GM12878 (cell line): ENCODE measurements at regions of chr18 and their contacts with region 1.

Region 1: DNA sequence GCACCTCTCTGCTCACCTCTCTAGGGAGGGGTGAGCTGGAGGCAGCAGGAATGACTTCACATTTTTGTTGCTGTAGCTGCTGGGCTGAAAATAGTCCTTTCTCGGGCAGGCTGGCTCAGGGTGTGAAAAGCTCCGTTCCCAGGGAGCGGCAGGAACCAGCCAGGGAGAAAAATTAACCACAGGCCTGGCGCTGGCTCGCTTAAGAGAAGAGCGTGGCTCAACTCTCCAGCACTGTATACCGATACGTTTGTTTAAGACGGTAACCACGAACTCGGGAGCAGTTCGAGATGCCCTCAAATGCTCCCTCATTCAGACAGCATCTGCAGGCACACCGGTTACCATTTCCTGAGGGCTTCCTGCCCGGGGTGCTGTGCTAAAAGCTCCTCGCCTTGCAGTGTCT is 129.6 kb downstream of the CELF4 start:
- DNase-seq: no peak
- ATAC-seq: no peak
- H3K4me3 ChIP-seq: no peak overlapping the region
- H3K27ac ChIP-seq: no peak overlapping the region
- H3K4me1 ChIP-seq: no peaks in the 10 kb centered on the region; the same call in 1 of the 2 replicates
- H3K27me3 ChIP-seq: no peaks in the 10 kb centered on the region
- CTCF ChIP-seq: no peak
- EP300 ChIP-seq: no peak
- POLR2A ChIP-seq: no peak
- RAD21 ChIP-seq: no peak

Region 2: DNA sequence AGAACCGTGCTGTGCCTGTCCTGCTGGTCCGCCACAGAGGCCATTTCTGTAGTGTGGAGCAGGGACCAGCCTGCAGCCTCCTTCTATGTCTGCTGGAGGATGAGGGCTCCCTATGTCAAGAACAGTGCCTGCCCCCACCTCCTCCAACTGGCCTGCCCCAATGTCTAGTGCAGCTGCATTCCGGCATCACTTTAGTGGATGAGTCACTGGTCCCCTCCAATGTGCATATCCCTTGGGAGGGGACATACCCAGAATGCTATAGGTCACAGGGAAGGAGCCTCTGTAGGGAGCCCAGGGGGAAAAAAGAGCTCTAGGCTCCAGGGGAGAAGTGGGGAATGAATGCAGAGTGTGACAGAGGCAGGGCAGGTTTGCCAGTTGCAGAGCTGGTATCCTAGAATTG is 89.9 kb before region 1 on chr18:
- CTCF ChIA-PET with region 1: no interaction called
- POLR2A ChIA-PET with region 1: no interaction called
- RAD21 ChIA-PET with region 1: no interaction called
- SMC1A ChIA-PET with region 1: no interaction called
- in situ Hi-C with region 1: no loop called
- intact Hi-C with region 1: no loop called
- DNase-seq: no peak
- ATAC-seq: no peak
- H3K4me3 ChIP-seq: no peak overlapping the region
- H3K27ac ChIP-seq: no peak overlapping the region
- H3K4me1 ChIP-seq: no peaks in the 10 kb centered on the region
- H3K27me3 ChIP-seq: peaks cover 2 to 5% of the 10 kb centered on the region in 2 experiments; a peak in 3 of 4 replicates
- CTCF ChIP-seq: no peak
- EP300 ChIP-seq: no peak
- POLR2A ChIP-seq: no peak
- RAD21 ChIP-seq: no peak

Region 3: GRCh38 chr18:37385846-37386778 is 49.9 kb before region 1 on chr18:
- CTCF ChIA-PET with region 1: interaction called, 8 read pairs
- POLR2A ChIA-PET with region 1: no interaction called
- RAD21 ChIA-PET with region 1: interaction called, 11 read pairs
- SMC1A ChIA-PET with region 1: interaction called, 12 read pairs
- in situ Hi-C with region 1: no loop called
- intact Hi-C with region 1: loop called (anchors 5 kb)
- DNase-seq: no peak
- ATAC-seq: peak; percentile 27; the same call in 1 of the 3 replicates
- H3K4me3 ChIP-seq: no peak overlapping the region
- H3K27ac ChIP-seq: no peak overlapping the region
- H3K4me1 ChIP-seq: no peaks in the 10 kb centered on the region
- H3K27me3 ChIP-seq: no peaks in the 10 kb centered on the region; a peak in 3 of 4 replicates
- CTCF ChIP-seq: peak; percentile 49 to 64 (median 53)
- EP300 ChIP-seq: no peak
- POLR2A ChIP-seq: no peak
- RAD21 ChIP-seq: peak; percentile 75

Region 4: GRCh38 chr18:37391698-37392548 is 44.1 kb before region 1 on chr18:
- CTCF ChIA-PET with region 1: interaction called, 8 read pairs
- POLR2A ChIA-PET with region 1: no interaction called
- RAD21 ChIA-PET with region 1: interaction called, 11 read pairs
- SMC1A ChIA-PET with region 1: interaction called, 12 read pairs
- in situ Hi-C with region 1: no loop called
- intact Hi-C with region 1: loop called (anchors 5 kb)
- DNase-seq: peak; percentile 53
- ATAC-seq: peak; percentile 85
- H3K4me3 ChIP-seq: no peak overlapping the region
- H3K27ac ChIP-seq: no peak overlapping the region
- H3K4me1 ChIP-seq: peaks cover 17% of the 10 kb centered on the region
- H3K27me3 ChIP-seq: peaks cover 2 to 4% of the 10 kb centered on the region in 2 experiments; a peak in 3 of 4 replicates
- CTCF ChIP-seq: no peak
- EP300 ChIP-seq: no peak
- POLR2A ChIP-seq: no peak
- RAD21 ChIP-seq: no peak

Region 5: DNA sequence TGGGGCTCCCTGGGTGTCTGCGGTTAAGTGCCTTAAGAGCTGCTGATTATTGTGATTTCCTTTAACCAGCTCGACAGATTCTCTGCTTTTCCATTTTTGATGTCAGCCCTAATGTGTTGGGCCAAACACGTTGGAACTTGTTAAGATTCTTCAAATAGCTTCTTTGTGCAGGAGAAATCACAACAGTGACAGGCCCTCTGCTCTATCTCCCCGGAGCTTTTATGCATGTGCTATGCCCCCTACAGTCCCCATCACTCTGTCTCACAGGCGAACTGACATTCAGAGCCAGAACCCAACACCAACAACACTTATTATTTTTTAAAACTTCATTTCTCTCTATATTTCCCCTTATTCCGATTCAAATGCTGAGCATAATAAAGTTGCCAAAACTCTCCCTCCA is 501.3 kb after region 1 on chr18:
- CTCF ChIA-PET with region 1: no interaction called
- POLR2A ChIA-PET with region 1: no interaction called
- RAD21 ChIA-PET with region 1: no interaction called
- SMC1A ChIA-PET with region 1: no interaction called
- in situ Hi-C with region 1: no loop called
- intact Hi-C with region 1: no loop called
- DNase-seq: no peak
- ATAC-seq: no peak
- H3K4me3 ChIP-seq: no peak overlapping the region
- H3K27ac ChIP-seq: no peak overlapping the region
- H3K4me1 ChIP-seq: no peaks in the 10 kb centered on the region
- H3K27me3 ChIP-seq: no peaks in the 10 kb centered on the region
- CTCF ChIP-seq: no peak
- EP300 ChIP-seq: no peak
- POLR2A ChIP-seq: no peak
- RAD21 ChIP-seq: no peak